ENCODE measurements at regions of chr5 and their contacts with region 1.

Region 1: DNA sequence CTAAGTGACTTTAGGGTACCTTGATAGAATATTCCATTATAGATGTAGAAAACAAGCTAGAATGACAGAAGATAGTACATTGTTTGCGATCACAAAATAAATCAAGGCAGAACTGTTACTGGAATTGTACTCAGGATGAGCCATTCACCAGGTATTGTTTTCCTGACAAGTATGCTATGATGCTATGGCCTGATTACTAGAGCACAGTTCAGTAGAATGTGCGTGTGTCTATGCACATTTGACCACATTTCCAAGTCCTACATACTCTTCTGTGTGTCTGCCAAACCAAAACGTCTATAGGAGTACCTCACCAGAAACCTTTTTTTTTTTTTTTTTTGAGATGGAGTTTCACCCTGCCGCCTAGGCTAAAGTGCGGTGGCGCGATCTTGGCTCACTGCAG is 43.3 kb upstream of the CDC42SE2 start:
- DNase-seq: no peak
- H3K4me3 ChIP-seq: no peak overlapping the region
- H3K27ac ChIP-seq: no peak overlapping the region
- H3K4me1 ChIP-seq: no peaks in the 10 kb centered on the region
- H3K27me3 ChIP-seq: no peaks in the 10 kb centered on the region
- CTCF ChIP-seq: no peak
- POLR2A ChIP-seq: no peak

Region 2: GRCh38 chr5:130710596-130710995 is 510.0 kb before region 1 on chr5:
- intact Hi-C with region 1: no loop called
- DNase-seq: no peak
- H3K4me3 ChIP-seq: no peak overlapping the region
- H3K27ac ChIP-seq: no peak overlapping the region
- H3K4me1 ChIP-seq: no peaks in the 10 kb centered on the region
- H3K27me3 ChIP-seq: no peaks in the 10 kb centered on the region
- CTCF ChIP-seq: no peak
- POLR2A ChIP-seq: no peak

Region 3: DNA sequence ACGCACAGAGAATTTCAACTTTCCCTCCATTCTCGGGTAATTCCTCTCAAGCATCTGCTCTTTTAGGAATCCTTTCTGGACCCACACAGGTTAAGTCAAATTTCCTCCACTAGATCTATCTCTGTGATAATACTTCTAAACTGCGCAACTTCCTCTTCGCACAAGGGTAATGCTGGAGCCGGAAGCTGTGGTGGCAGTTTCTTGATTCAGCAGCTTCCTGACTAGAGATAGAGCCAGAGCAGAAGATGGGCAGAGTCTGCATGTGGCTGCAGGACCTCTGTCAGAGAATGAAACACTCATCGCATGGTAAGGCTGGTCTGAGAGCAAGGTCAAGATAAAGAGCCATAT is 32.2 kb after region 1 on chr5:
- intact Hi-C with region 1: loop called (anchors 1 kb)
- DNase-seq: no peak
- H3K4me3 ChIP-seq: peak overlapping the region in 1 of 2 donors; percentile 5
- H3K27ac ChIP-seq: no peak overlapping the region
- H3K4me1 ChIP-seq: no peaks in the 10 kb centered on the region
- H3K27me3 ChIP-seq: no peaks in the 10 kb centered on the region
- CTCF ChIP-seq: no peak
- POLR2A ChIP-seq: peak in 1 of 2 donors; percentile 10